ENCODE measurements at regions of chr4 and their contacts with region 1.

Region 1: DNA sequence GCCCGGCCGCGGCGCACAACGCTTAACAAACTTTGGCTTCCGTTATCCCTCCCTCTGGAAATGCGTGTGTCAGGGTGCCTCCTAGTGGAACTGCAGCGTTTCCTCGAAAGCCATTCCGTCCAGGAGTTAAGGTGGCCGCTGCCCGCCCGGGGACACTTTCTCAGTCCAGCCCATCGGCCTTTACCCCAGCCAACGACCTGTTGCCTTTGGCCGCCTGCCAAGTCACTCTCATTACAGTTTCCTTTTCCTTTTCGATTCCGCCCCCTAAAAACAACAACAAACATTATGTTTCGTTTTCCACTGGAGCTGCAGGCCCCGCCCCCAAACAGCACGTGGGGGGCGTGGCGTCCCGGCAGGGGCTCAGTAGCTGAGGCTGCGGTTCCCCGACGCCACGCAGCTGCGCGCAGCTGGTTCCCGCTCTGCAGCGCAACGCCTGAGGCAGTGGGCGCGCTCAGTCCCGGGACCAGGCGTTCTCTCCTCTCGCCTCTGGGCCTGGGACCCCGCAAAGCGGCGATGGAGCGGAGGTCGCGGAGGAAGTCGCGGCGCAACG is at the start of gene HERC5:
- DNase-seq: peak; percentile 83 to 97
- H3K4me3 ChIP-seq: peak within 1 kb of the TSS; percentile 68 to 99
- H3K27ac ChIP-seq: peak within 1 kb of the TSS; percentile 83 to 98
- H3K4me1 ChIP-seq: peaks cover 3 to 12% of the 10 kb centered on the region in 2 donors
- H3K27me3 ChIP-seq: no peaks in the 10 kb centered on the region
- CTCF ChIP-seq: peak; percentile 54 to 76 (median 72)
- total RNA-seq, gene HERC5: 0.32 TPM

Region 2: GRCh38 chr4:88217920-88218319 is 238.9 kb before region 1 on chr4:
- intact Hi-C with region 1: loop called (anchors 2 kb)
- DNase-seq: no peak
- H3K4me3 ChIP-seq: no peak overlapping the region
- H3K27ac ChIP-seq: no peak overlapping the region
- H3K4me1 ChIP-seq: no peaks in the 10 kb centered on the region
- H3K27me3 ChIP-seq: no peaks in the 10 kb centered on the region
- CTCF ChIP-seq: no peak

Region 3: DNA sequence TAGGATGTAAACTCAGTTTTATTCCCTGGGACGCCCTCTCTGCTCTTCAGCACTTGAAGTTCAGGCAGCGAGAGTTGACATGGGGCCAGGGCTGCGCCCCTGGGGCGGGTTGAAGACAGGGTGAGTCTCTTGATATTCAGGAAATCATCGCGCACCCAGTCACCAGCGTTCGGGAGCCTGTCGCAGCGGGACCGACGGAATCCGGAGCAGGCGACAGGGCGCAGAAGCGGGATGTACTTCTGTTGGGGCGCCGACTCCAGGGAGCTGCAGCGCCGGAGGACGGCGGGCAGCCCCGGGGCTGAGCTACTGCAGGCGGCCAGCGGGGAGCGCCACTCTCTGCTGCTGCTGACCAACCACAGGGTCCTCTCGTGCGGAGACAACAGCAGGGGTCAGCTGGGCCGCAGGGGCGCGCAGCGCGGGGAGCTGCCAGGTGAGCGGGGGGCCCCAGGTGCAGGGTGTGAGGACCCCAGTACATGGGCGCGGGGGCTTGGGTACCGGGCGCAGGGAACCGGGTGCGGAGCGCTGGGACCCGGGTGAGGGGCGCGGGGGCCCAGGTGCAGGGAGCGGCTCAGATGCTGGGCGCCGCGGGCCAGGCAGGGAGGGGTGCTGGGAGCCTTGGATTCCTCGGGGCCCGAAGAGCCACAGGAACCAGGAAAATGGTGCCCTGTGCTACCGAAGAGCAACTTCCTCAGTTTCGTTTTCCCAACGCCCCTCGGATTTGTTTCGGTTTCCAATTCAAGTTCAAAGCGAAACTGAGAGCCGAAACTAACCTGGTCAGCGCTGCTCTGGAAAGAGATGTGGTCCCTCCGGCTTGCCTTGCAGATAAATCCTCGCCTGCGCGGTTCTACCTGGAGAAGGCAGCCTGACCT is 77.9 kb before region 1 on chr4 and contains the start of gene HERC6:
- intact Hi-C with region 1: loop called (anchors 2 kb)
- DNase-seq: peak; percentile 23 to 84
- H3K4me3 ChIP-seq: peak within 1 kb of the TSS; percentile 69 to 81
- H3K27ac ChIP-seq: peak within 1 kb of the TSS; percentile 66 to 77
- H3K4me1 ChIP-seq: no peaks in the 10 kb centered on the region
- H3K27me3 ChIP-seq: no peaks in the 10 kb centered on the region
- CTCF ChIP-seq: peak; percentile 81 to 84 (median 81)
- total RNA-seq, gene HERC6: 32.7 TPM

Region 4: DNA sequence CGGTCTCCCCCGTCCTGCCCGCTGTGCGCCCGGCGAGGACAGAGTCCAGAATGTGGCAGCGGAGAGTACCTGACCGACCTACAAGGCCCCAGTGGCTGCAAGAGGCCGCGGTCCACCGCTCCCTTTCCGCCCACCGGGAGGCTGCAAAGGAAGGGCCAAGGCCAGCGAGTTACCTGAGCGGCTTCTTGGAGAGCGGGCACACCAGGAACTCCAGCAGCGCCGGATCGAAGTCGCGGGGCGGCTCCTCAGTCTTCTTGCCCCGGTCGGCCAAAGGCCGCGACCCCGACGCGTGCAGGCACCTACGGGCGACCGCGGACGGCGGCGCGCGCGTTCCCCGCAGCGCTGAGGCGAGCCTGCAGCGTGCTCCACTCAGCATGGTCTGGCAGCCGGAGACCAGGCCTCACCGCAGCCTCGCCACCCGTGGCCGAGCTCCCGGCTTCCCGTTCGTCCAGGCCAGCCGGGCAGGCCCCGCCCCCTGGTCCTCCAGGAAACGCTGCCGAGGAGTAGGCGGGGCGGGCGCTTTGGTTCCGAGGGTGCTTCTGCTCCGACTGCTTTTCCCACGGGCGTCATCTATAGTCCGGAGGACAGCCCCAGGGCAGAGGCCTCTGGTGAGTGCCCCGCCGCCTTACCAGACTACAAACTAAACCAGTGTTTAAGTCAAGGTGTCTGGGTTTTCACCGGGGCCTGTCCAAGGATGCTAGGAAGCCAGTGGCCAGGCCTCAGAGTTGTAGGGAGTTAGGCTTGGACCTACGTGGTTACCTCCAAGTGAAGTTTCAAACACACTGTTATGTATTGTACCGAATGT is 66.7 kb after region 1 on chr4 and contains the start of gene PYURF:
- intact Hi-C with region 1: loop called (anchors 5 kb)
- DNase-seq: peak; percentile 88 to 99
- H3K4me3 ChIP-seq: peak within 1 kb of the TSS; percentile 87 to 95
- H3K27ac ChIP-seq: peak within 1 kb of the TSS; percentile 87 to 94
- H3K4me1 ChIP-seq: peaks cover 0 to 16% of the 10 kb centered on the region in 2 donors
- H3K27me3 ChIP-seq: no peaks in the 10 kb centered on the region
- CTCF ChIP-seq: peak in 1 of 3 experiments; percentile 5
- total RNA-seq, gene PYURF: 91.6 TPM

Region 5: GRCh38 chr4:88613417-88613875 is 156.6 kb after region 1 on chr4:
- intact Hi-C with region 1: loop called (anchors 10 kb)
- DNase-seq: no peak
- H3K4me3 ChIP-seq: no peak overlapping the region
- H3K27ac ChIP-seq: peak overlapping the region; percentile 72 to 78
- H3K4me1 ChIP-seq: peaks cover 15 to 35% of the 10 kb centered on the region in 2 donors
- H3K27me3 ChIP-seq: no peaks in the 10 kb centered on the region
- CTCF ChIP-seq: no peak

Measured in ascending aorta (tissue), 2 donors.